ENCODE measurements at regions of chr4 and their contacts with region 1.

Region 1: DNA sequence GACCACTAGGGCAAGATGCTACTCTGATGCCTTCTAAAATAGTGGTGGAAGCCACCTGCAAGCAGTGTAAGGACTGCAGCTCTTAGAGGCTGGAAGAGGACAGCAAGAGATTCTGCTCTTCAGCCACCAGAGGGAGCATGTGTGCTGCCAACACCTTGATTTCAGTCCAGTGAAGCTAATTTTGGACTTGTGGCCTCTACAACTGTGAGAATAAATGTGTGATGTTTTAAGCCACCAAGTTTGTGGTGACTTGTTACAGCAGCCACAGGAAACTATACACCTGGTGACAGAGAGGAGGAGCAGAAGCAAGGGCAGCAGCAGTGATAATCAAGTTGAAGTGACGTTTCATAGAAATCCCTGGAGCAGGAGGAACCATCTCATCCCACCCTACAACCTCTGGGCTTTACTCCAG is 55.9 kb downstream of the FGFBP1 start:
- DNase-seq: peak; percentile 48
- H3K4me3 Mint-ChIP-seq: no peak overlapping the region
- H3K27ac Mint-ChIP-seq: no peak overlapping the region
- H3K4me1 Mint-ChIP-seq: no peaks in the 10 kb centered on the region
- H3K27me3 Mint-ChIP-seq: peaks cover 5% of the 10 kb centered on the region

Region 2: GRCh38 chr4:15610855-15611254 is 271.8 kb before region 1 on chr4:
- CTCF ChIA-PET with region 1: no interaction called
- POLR2A ChIA-PET with region 1: no interaction called
- intact Hi-C with region 1: no loop called
- DNase-seq: no peak
- H3K4me3 Mint-ChIP-seq: no peak overlapping the region
- H3K27ac Mint-ChIP-seq: no peak overlapping the region
- H3K4me1 Mint-ChIP-seq: peaks cover 5% of the 10 kb centered on the region
- H3K27me3 Mint-ChIP-seq: no peaks in the 10 kb centered on the region

Region 3: DNA sequence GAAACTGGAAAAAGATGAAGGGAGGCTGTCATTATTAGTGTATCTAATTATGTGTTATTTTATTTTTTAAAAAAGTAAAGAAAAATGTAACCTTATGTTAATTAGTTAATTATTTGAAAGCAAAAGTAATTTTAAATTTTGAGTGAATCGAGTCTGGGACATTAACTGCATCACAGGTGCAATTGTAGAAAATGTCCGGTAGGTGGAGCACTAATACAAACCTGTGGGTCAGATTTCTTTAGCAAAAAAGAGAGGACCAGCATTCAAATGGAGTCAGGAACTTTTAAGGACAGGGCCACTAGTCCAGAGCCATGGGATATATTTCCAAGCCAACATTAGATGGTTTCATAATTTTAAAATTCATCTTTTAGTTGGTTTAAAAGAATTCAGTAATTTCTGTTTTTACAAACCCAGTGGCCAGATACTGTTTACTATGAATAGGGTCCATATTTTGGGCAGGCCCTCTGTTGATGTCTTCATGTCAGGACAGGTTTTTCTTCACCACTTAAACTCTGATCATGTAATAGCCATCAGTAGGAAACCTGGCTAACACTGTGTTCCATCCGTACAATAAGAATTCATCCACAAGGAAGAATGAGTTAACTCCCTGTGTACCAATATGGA is 152.7 kb before region 1 on chr4:
- CTCF ChIA-PET with region 1: interaction called, 10 read pairs
- POLR2A ChIA-PET with region 1: no interaction called
- intact Hi-C with region 1: loop called (anchors 2 kb)
- DNase-seq: peak; percentile 15
- H3K4me3 Mint-ChIP-seq: no peak overlapping the region
- H3K27ac Mint-ChIP-seq: no peak overlapping the region
- H3K4me1 Mint-ChIP-seq: no peaks in the 10 kb centered on the region
- H3K27me3 Mint-ChIP-seq: peaks cover 2% of the 10 kb centered on the region

Region 4: GRCh38 chr4:15848191-15848842 is 34.4 kb before region 1 on chr4:
- CTCF ChIA-PET with region 1: interaction called, 18 read pairs
- POLR2A ChIA-PET with region 1: no interaction called
- intact Hi-C with region 1: no loop called
- DNase-seq: no peak
- H3K4me3 Mint-ChIP-seq: no peak overlapping the region
- H3K27ac Mint-ChIP-seq: no peak overlapping the region
- H3K4me1 Mint-ChIP-seq: no peaks in the 10 kb centered on the region
- H3K27me3 Mint-ChIP-seq: no peaks in the 10 kb centered on the region

Region 5: GRCh38 chr4:15901998-15902397 is 19.3 kb after region 1 on chr4:
- CTCF ChIA-PET with region 1: interaction called, 15 read pairs
- POLR2A ChIA-PET with region 1: no interaction called
- intact Hi-C with region 1: no loop called
- DNase-seq: no peak
- H3K4me3 Mint-ChIP-seq: no peak overlapping the region
- H3K27ac Mint-ChIP-seq: no peak overlapping the region
- H3K4me1 Mint-ChIP-seq: no peaks in the 10 kb centered on the region
- H3K27me3 Mint-ChIP-seq: peaks cover 38% of the 10 kb centered on the region

Region 6: DNA sequence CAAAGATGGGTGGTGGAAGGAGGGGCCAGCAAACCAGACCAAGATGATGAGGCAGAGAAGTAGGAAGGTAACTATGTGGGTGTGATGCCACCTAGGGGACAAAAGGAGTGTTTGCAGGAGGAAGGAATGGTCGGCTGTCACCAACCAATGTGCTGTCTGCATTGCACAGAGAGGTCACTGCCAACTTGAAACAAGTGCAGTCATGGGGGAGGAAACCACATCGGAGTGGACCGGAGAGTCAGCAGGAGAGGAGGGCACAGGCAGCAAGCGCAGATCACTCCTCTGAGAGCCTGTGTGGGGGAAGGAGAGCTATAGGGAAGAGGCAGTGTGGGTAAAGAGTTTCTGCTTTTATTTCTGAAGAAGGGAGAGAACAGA is 118.8 kb after region 1 on chr4:
- CTCF ChIA-PET with region 1: interaction called, 55 read pairs
- POLR2A ChIA-PET with region 1: no interaction called
- intact Hi-C with region 1: loop called (anchors 1 kb)
- DNase-seq: peak; percentile 58
- H3K4me3 Mint-ChIP-seq: no peak overlapping the region
- H3K27ac Mint-ChIP-seq: no peak overlapping the region
- H3K4me1 Mint-ChIP-seq: no peaks in the 10 kb centered on the region
- H3K27me3 Mint-ChIP-seq: peaks cover 6% of the 10 kb centered on the region

Region 7: GRCh38 chr4:16217300-16218051 is 334.8 kb after region 1 on chr4:
- CTCF ChIA-PET with region 1: no interaction called
- POLR2A ChIA-PET with region 1: no interaction called
- intact Hi-C with region 1: no loop called
- DNase-seq: no peak
- H3K4me3 Mint-ChIP-seq: peak overlapping the region; percentile 13
- H3K27ac Mint-ChIP-seq: peak overlapping the region; percentile 47
- H3K4me1 Mint-ChIP-seq: peaks cover 69% of the 10 kb centered on the region
- H3K27me3 Mint-ChIP-seq: no peaks in the 10 kb centered on the region

Region 8: GRCh38 chr4:16253127-16253960 is 370.7 kb after region 1 on chr4:
- CTCF ChIA-PET with region 1: no interaction called
- POLR2A ChIA-PET with region 1: no interaction called
- intact Hi-C with region 1: no loop called
- DNase-seq: no peak
- H3K4me3 Mint-ChIP-seq: no peak overlapping the region
- H3K27ac Mint-ChIP-seq: no peak overlapping the region
- H3K4me1 Mint-ChIP-seq: peaks cover 4% of the 10 kb centered on the region
- H3K27me3 Mint-ChIP-seq: no peaks in the 10 kb centered on the region